Activated CD4-positive, alpha-beta T cell treated with anti-CD3 and anti-CD28 coated beads for 36 hours (primary cell): ENCODE measurements at regions of chr15 and their contacts with region 1.

Region 1: GRCh38 chr15:30670056-30670455 is 44.1 kb downstream of the ARHGAP11B start:
- DNase-seq: no peak
- ATAC-seq: no peak
- H3K4me3 Mint-ChIP-seq: no peak overlapping the region
- H3K27ac Mint-ChIP-seq: no peak overlapping the region
- H3K4me1 Mint-ChIP-seq: peaks cover 10% of the 10 kb centered on the region
- H3K27me3 Mint-ChIP-seq: no peaks in the 10 kb centered on the region

Region 2: GRCh38 chr15:30650012-30650929 is 19.8 kb before region 1 on chr15:
- CTCF ChIA-PET with region 1: no interaction called
- POLR2A ChIA-PET with region 1: no interaction called
- intact Hi-C with region 1: loop called in 1 of 2 experiments (anchors 2 kb)
- DNase-seq: no peak
- ATAC-seq: peak; percentile 44
- H3K4me3 Mint-ChIP-seq: no peak overlapping the region
- H3K27ac Mint-ChIP-seq: no peak overlapping the region
- H3K4me1 Mint-ChIP-seq: peaks cover 23% of the 10 kb centered on the region
- H3K27me3 Mint-ChIP-seq: no peaks in the 10 kb centered on the region